Endothelial cell of umbilical vein (primary cell): ENCODE measurements at regions of chr7 and their contacts with region 1.

Region 1: DNA sequence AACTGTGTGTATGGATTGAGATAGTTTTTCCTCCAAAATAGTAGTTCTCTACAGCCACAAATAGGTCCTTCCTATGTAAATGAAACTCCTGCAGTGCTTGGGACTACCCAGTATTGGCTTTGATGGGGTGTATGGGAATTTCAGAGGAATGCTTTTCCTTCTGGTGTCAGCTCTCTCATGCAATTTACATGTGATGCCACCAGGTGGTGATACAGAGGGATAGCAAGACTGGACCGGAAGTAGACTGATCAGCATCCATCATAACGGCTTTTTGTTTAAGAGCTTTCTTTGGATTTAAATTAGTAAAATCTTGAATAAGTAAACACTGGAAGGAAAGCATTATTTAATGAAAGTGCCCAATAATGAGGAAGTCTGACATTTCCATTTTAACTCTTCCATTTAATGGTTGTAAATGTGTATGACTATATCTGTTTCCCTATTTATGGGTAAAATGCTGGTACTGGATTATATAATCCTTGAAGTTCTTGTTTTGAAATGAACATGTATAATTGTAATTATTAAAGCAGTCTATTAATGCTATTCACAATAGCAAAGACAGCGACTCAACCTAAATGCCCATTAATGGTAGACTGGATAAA is 22.7 kb downstream of the DYNC1I1 start:
- DNase-seq: peak; percentile 18
- H3K4me3 ChIP-seq: no peak overlapping the region
- H3K27ac ChIP-seq: no peak overlapping the region
- H3K4me1 ChIP-seq: peaks cover 12% of the 10 kb centered on the region
- H3K27me3 ChIP-seq: no peaks in the 10 kb centered on the region
- CTCF ChIP-seq: peak; percentile 38 to 46
- POLR2A ChIP-seq: no peak

Region 2: DNA sequence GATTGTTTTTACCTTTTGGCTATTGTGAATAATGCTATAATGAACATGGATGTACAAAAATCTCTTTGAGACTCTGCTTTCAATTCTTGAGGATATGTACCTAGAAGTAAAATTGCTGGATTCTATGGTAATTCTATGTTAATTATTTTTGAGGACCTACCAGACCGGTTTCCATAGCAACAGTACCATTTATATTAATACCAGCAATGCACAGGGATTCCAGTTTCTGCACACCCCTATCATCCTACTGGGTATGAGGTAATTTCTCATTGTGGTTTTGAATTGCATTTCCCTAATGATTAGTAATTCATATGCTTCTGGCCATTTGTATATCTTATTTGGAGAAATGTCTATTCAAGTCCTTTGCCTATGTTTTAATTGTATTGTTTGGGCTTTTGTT is 897.5 kb before region 1 on chr7:
- CTCF ChIA-PET with region 1: no interaction called
- POLR2A ChIA-PET with region 1: no interaction called
- dilution Hi-C with region 1: no loop called
- intact Hi-C with region 1: no loop called
- DNase-seq: no peak
- H3K4me3 ChIP-seq: no peak overlapping the region
- H3K27ac ChIP-seq: no peak overlapping the region
- H3K4me1 ChIP-seq: no peaks in the 10 kb centered on the region
- H3K27me3 ChIP-seq: peaks cover 0 to 1% of the 10 kb centered on the region in 2 experiments
- CTCF ChIP-seq: no peak
- POLR2A ChIP-seq: no peak

Region 3: GRCh38 chr7:95723592-95724180 is 71.3 kb before region 1 on chr7:
- CTCF ChIA-PET with region 1: interaction called, 25 read pairs
- POLR2A ChIA-PET with region 1: no interaction called
- dilution Hi-C with region 1: no loop called
- intact Hi-C with region 1: loop called (anchors 2 kb)
- DNase-seq: peak; percentile 76
- H3K4me3 ChIP-seq: no peak overlapping the region
- H3K27ac ChIP-seq: no peak overlapping the region
- H3K4me1 ChIP-seq: no peaks in the 10 kb centered on the region
- H3K27me3 ChIP-seq: peaks cover 7 to 13% of the 10 kb centered on the region in 2 experiments
- CTCF ChIP-seq: peak; percentile 31 to 32
- POLR2A ChIP-seq: no peak

Region 4: GRCh38 chr7:95772298-95772770 is 22.7 kb before region 1 on chr7 and contains the start of gene DYNC1I1:
- CTCF ChIA-PET with region 1: interaction called, 14 read pairs
- POLR2A ChIA-PET with region 1: no interaction called
- dilution Hi-C with region 1: no loop called
- intact Hi-C with region 1: loop called (anchors 2 kb)
- DNase-seq: peak; percentile 61
- H3K4me3 ChIP-seq: peak within 1 kb of the TSS; percentile 33 to 70 (median 44)
- H3K27ac ChIP-seq: no peak within 1 kb of the TSS
- H3K4me1 ChIP-seq: peaks cover 8% of the 10 kb centered on the region
- H3K27me3 ChIP-seq: peaks cover 0 to 2% of the 10 kb centered on the region in 2 experiments
- CTCF ChIP-seq: no peak
- POLR2A ChIP-seq: no peak
- total RNA-seq, gene DYNC1I1: 3.3 and 3.6 TPM in 2 replicates

Region 5: GRCh38 chr7:95811846-95812445 is 16.9 kb after region 1 on chr7:
- CTCF ChIA-PET with region 1: interaction called, 11 read pairs
- POLR2A ChIA-PET with region 1: no interaction called
- dilution Hi-C with region 1: no loop called
- intact Hi-C with region 1: no loop called
- DNase-seq: no peak
- H3K4me3 ChIP-seq: no peak overlapping the region
- H3K27ac ChIP-seq: no peak overlapping the region
- H3K4me1 ChIP-seq: no peaks in the 10 kb centered on the region
- H3K27me3 ChIP-seq: no peaks in the 10 kb centered on the region
- CTCF ChIP-seq: no peak
- POLR2A ChIP-seq: no peak

Region 6: DNA sequence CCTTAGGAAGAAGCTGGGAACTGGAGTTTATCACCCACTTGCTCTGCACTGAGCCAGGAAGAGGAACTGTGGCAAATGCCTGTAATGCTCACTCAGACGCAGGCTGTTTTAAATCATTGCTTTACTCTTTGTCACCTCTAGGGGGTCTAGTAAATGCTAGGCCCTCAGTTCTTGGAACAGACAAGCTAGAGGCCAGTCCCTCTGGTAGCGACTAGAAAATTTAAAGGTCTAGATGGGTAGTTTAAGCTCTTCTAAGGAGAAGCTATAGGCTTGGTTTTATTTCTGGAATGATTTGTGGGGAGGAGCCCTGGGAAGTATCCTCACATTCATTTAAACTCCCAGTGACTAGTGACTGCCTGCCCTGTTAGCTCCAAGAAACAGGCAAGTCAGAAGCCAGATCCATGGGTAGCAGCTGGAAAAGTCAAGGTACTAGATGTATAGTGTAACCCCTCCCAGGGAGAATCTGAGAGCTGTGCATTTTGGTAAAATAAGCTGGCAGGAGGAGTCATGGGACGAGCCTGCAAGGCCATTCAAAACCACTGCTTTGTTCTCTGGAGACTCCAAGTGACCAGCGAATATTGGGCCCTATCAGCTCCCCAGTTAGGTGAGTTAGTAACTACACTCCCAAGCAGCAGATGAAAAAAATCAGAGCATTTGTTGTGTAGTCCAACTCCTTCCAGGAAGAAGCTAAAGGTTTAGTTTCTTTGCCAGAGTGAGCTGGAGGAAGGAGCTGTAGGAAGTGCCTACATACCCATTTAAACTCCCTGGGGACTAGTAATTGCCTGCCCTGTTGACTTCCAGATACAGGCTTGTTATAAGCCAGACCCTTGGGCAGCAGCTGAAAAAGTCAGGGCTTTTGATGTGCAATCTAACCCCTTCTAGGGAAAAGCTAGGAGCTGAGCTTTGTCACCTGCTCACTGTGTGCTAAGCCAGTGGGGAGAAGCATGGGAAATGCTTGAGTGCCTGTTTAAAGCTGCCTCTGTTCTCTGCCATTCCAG is 46.2 kb after region 1 on chr7:
- CTCF ChIA-PET with region 1: interaction called, 17 read pairs
- POLR2A ChIA-PET with region 1: no interaction called
- dilution Hi-C with region 1: no loop called
- intact Hi-C with region 1: loop called (anchors 5 kb)
- DNase-seq: no peak
- H3K4me3 ChIP-seq: no peak overlapping the region
- H3K27ac ChIP-seq: no peak overlapping the region
- H3K4me1 ChIP-seq: no peaks in the 10 kb centered on the region
- H3K27me3 ChIP-seq: no peaks in the 10 kb centered on the region
- CTCF ChIP-seq: peak; percentile 19 to 31
- POLR2A ChIP-seq: no peak

Region 7: DNA sequence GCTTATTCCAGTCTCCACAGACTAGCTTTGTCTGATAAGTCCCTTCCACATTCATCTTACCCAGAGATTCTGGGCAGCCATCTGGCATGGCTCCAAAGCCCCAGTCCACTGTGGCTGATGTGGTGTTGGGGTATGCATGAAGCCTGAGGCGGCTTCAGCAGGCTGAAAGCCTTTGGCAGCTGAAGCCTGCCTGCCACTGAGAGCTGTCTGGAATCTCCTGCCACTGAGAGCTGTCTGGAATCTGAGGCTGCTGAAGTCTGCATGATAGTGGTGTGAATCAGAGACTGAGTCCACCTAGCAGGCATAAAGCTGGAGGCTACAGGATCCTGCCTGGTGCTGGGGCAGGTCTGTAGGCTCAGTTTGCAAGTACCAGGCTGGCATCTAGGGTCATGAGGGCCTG is 64.4 kb after region 1 on chr7:
- CTCF ChIA-PET with region 1: interaction called, 17 read pairs
- POLR2A ChIA-PET with region 1: no interaction called
- dilution Hi-C with region 1: no loop called
- intact Hi-C with region 1: no loop called
- DNase-seq: no peak
- H3K4me3 ChIP-seq: no peak overlapping the region
- H3K27ac ChIP-seq: no peak overlapping the region
- H3K4me1 ChIP-seq: no peaks in the 10 kb centered on the region
- H3K27me3 ChIP-seq: no peaks in the 10 kb centered on the region
- CTCF ChIP-seq: no peak
- POLR2A ChIP-seq: no peak

Region 8: GRCh38 chr7:95886501-95887090 is 91.6 kb after region 1 on chr7:
- CTCF ChIA-PET with region 1: no interaction called
- POLR2A ChIA-PET with region 1: no interaction called
- dilution Hi-C with region 1: no loop called
- intact Hi-C with region 1: loop called (anchors 1 kb)
- DNase-seq: peak; percentile 96
- H3K4me3 ChIP-seq: peak overlapping the region in 1 of 3 experiments; percentile 7
- H3K27ac ChIP-seq: peak overlapping the region; percentile 73
- H3K4me1 ChIP-seq: peaks cover 17% of the 10 kb centered on the region
- H3K27me3 ChIP-seq: no peaks in the 10 kb centered on the region
- CTCF ChIP-seq: no peak
- POLR2A ChIP-seq: no peak

Region 9: DNA sequence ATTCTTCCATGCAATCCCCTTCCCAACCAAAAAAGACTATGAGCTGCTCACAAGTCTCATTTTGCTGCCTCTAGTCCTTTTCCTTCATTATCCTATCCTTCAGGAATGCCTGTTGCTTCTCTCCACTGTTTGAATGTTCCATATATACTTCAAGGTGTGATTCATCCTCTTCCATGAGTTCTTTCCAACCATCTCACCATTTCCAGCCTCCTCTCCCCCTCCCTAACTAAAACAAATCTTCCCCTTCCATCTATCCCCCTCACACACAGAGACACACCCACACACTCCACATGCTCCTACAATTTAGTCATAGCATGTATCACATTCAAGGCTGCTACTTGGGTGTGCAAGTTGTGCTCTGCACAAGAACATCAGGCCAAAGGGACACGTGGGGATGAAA is 231.6 kb after region 1 on chr7:
- CTCF ChIA-PET with region 1: no interaction called
- POLR2A ChIA-PET with region 1: no interaction called
- dilution Hi-C with region 1: no loop called
- intact Hi-C with region 1: no loop called
- DNase-seq: no peak
- H3K4me3 ChIP-seq: no peak overlapping the region
- H3K27ac ChIP-seq: no peak overlapping the region
- H3K4me1 ChIP-seq: peaks cover 5% of the 10 kb centered on the region
- H3K27me3 ChIP-seq: no peaks in the 10 kb centered on the region
- CTCF ChIP-seq: no peak
- POLR2A ChIP-seq: no peak

Region 10: GRCh38 chr7:96952974-96953391 is 1158.0 kb after region 1 on chr7:
- CTCF ChIA-PET with region 1: no interaction called
- POLR2A ChIA-PET with region 1: no interaction called
- dilution Hi-C with region 1: no loop called
- intact Hi-C with region 1: no loop called
- DNase-seq: no peak
- H3K4me3 ChIP-seq: no peak overlapping the region
- H3K27ac ChIP-seq: no peak overlapping the region
- H3K4me1 ChIP-seq: no peaks in the 10 kb centered on the region
- H3K27me3 ChIP-seq: no peaks in the 10 kb centered on the region
- CTCF ChIP-seq: no peak
- POLR2A ChIP-seq: no peak